AG04449 (cell line): ENCODE measurements at regions of chr1 and their contacts with region 1.

Region 1: GRCh38 chr1:110209715-110210603 is at the start of gene KCNC4:
- DNase-seq: no peak
- H3K4me3 ChIP-seq: peak within 1 kb of the TSS; percentile 57
- CTCF ChIP-seq: no peak

Region 2: DNA sequence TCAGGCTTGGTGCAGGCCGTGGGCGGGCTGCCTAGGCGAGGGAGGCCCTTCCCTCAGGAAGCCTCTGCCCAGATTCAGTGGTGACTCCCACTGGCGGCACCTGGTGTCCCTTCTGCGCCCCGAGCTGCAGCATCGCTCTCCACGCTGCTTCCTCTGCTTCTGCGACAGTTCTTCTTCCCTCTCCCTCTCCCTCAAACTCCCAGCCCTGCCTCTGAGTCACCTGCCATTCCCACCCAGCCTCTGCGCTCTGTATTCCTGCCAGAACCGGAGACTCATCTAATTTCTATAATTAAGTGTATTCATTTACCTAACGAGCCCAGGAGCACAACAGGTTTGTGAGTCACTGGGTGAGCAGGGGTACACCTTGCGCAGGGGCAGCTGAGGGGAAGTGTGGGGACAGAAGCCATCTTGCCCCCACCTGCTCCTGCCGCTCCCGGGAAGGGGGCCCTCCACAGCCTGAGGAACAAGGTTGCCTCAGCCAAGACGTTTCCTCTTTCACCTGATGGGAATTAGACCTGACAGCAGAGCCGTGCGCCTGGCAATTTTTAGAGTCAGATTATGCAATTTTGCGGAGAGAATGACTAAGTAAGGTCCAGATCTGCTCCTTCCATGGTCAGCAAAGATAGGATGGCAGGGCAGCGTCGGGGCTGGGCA is 19.5 kb after region 1 on chr1:
- CTCF ChIA-PET with region 1: interaction called, 50 read pairs
- POLR2A ChIA-PET with region 1: no interaction called
- DNase-seq: no peak
- H3K4me3 ChIP-seq: no peak overlapping the region
- CTCF ChIP-seq: no peak

Region 3: DNA sequence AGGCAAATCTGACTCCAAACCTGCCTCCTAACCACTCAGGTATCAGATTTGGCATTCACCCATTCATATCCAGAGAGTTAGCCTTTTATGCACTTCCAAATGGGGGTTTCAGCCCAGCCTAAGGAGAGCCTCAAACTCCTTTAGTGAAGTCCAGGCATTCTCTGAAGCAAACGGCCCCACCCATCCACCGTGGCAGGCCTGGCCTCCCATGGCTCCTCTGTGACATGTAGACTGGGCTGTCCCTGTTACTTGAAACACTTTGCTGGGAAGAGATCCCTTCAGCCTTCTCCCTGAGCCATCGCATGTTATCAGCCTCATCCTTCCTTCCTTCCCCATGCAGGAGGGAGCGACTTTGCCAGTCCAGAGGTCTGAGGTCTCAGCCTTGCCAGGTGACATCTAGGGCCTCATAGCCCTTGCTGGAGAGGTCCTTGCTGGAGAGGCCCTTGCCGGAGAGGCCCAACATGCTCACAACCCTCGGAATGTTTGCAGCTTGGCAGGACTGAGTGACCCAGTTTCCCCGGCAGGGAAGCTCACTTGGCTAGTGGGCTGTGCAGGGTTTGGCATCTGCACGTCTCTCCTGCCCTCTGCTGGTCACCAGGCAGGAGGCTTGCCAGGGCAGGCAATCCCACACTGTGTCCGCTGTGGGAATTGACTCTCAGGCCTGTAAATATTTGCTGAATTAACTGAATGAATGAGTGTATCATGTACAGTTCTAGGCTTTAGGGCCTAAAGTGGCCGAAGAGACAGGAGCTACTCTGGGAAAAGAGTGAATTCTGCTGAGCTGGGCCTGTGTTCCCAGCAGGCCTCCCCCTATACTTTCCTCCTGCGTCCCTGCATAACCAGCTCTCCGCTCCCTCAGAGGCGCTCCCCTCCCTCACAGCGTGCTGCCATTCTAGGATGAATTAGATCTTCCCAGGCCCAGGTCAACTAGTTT is 102.5 kb after region 1 on chr1:
- CTCF ChIA-PET with region 1: interaction called, 1,192 read pairs
- POLR2A ChIA-PET with region 1: interaction called, 8 read pairs
- DNase-seq: no peak
- H3K4me3 ChIP-seq: no peak overlapping the region
- CTCF ChIP-seq: peak; percentile 97

Region 4: DNA sequence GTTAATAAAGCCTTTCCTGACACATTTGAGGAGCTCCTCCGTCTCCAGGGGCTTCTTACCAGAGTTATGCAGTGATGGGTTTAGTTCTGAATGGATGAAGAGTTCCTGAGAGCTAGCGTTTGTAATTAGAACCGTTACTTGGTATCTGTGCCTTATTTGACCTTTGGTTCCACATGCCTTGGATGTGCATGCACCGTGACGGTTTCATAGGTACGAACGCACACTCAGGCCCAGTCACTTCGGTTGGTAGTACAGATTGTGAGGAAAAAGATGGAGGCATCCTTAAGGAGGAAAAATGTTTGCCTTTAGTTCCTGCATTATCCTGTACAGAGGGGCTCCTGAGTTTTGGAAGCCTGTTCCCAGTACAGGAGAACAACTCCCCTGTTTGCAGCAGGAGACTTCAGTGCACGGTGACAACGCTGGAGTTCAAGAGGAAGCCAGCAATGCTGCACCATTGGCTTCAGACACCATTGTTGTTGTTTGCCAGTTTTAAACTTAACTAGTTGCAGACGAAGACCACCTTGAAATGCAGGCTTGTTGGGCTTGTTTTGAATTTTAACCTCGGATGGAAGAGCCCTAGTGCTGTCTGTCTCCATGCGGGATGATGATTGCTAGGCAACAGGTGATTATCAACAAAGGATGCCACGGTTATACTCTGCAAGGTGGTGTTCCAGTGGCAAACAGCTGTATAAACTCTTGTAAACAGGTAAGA is 137.4 kb after region 1 on chr1:
- CTCF ChIA-PET with region 1: interaction called, 150 read pairs
- POLR2A ChIA-PET with region 1: no interaction called
- DNase-seq: no peak
- H3K4me3 ChIP-seq: no peak overlapping the region
- CTCF ChIP-seq: no peak

Region 5: GRCh38 chr1:110407260-110408210 is 197.6 kb after region 1 on chr1 and contains the start of gene LAMTOR5:
- CTCF ChIA-PET with region 1: interaction called, 41 read pairs
- POLR2A ChIA-PET with region 1: interaction called, 3 read pairs
- DNase-seq: peak; percentile 55
- H3K4me3 ChIP-seq: peak within 1 kb of the TSS; percentile 98
- CTCF ChIP-seq: no peak

Region 6: DNA sequence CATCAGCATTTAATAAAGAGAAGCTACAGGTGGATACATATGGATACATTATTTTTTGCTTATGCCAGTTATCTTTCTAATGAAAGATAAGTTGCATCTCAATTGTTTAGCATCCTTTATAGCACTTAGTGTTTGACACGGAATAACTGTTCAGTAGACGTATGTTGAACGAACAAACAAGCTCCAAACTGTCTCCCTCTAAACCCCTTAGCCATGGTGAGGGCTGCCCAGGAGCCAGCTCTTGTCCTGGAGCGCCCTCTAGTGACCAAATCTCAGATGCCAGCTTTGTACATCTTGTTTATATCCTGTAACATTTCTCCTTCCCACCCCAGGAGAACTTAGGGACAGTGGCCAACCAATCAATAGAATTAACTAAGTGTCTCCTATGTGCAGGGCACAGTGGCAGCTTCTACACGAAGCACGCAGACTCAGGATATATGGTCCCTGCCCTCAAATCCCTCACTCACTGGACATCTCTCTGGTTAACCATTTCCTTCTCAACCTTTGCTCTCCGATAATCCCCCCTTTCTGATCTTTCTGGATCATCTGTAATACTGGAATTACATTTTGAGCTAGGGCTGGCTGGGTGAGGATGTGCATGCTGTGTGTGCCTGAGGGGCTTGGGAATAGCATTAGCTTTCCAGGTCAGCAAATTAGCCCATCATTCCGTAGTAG is 286.1 kb after region 1 on chr1:
- CTCF ChIA-PET with region 1: interaction called, 281 read pairs
- POLR2A ChIA-PET with region 1: no interaction called
- DNase-seq: peak; percentile 28
- H3K4me3 ChIP-seq: no peak overlapping the region
- CTCF ChIP-seq: peak; percentile 78